Head of caudate nucleus (tissue), 42 donors: ENCODE measurements at regions of chr22 and their contacts with region 1.

Region 1: GRCh38 chr22:36280379-36280778 is 27.4 kb downstream of the APOL1 start:
- DNase-seq: no peak

Region 2: GRCh38 chr22:36194971-36195370 is 85.4 kb before region 1 on chr22:
- intact Hi-C with region 1: loop called (anchors 5 kb)
- DNase-seq: peak; percentile 14 to 82 (median 65)

Region 3: DNA sequence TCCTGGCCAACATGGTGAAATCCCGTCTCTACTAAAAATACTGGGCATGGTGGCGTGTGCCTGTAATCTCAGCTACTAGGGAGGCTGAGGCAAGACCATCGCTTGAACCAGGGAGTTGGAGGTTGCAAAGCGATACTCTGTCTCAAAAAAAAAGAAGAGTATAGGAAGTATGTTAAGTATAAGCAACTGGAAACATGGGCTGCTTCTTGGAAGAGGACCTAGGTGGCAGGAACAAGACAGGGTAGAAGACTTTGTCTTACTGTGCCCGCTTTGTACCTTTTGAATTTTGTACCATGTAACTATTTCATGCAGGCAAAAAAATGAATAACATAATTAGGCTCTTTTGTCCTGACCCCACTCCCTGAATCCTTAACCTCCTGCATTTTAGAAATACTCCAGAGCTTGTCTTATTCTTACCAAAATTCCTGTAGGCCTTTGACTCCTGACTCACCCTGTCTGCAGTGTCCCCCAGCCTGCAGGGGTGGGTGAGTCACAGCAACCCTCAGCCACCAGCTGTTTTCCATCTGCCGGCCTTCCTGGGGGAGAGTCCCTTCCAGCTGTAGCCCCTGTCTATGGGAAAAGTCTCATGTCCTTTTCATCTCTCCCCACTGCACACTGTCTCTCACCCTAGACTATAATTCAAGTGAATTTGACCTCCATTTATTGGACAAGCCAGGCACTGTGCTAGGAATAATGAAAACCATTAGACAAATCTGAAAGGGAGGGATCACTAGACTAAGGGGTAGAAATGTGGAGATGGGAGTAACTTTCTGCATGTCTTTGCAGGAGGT is 159.3 kb after region 1 on chr22:
- intact Hi-C with region 1: no loop called
- DNase-seq: no peak

Region 4: DNA sequence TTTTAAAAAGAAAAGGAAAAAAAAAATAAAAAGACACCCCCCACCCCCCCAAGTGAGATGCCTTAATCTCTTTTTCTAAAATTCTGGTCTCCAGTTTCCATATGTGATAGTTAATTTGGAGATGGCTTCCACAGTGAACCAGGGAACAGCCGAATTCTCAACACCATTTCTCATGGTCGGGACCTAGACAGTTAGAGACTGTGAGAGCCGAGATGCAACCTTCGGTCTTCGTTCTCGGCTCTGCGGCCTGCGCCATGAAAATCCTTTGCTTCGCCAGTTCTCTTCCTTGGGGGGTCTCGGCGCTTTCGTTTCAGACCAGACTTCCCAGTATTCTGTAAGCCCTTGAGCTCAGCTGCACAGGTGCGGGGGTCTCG is 422.4 kb after region 1 on chr22:
- intact Hi-C with region 1: no loop called
- DNase-seq: peak in 19 of 42 donors; percentile 4 to 48 (median 22)

Region 5: GRCh38 chr22:36823186-36823839 is 542.9 kb after region 1 on chr22:
- intact Hi-C with region 1: no loop called
- DNase-seq: no peak